ENCODE measurements at regions of chr1 and their contacts with region 1.

Region 1: GRCh38 chr1:240691521-240692338 is 79.8 kb upstream of the GREM2 start:
- DNase-seq: peak; percentile 53 to 65
- H3K4me3 ChIP-seq: no peak overlapping the region
- H3K4me1 ChIP-seq: peaks cover 11% of the 10 kb centered on the region
- H3K27me3 ChIP-seq: 0 out of 2 replicates have a peak, but pooled peaks cover 3% of the 10 kb centered on the region

Region 2: GRCh38 chr1:239655003-239655402 is 1036.7 kb before region 1 on chr1:
- in situ Hi-C with region 1: no loop called
- DNase-seq: no peak
- H3K4me3 ChIP-seq: no peak overlapping the region
- H3K4me1 ChIP-seq: 0 out of 2 replicates have a peak, but pooled peaks cover 3% of the 10 kb centered on the region
- H3K27me3 ChIP-seq: no peaks in the 10 kb centered on the region

Region 3: GRCh38 chr1:240004086-240004749 is 687.5 kb before region 1 on chr1:
- in situ Hi-C with region 1: loop called (anchors 25 kb)
- DNase-seq: peak in 1 of 2 experiments; percentile 55
- H3K4me3 ChIP-seq: no peak overlapping the region
- H3K4me1 ChIP-seq: no peaks in the 10 kb centered on the region
- H3K27me3 ChIP-seq: no peaks in the 10 kb centered on the region

Region 4: DNA sequence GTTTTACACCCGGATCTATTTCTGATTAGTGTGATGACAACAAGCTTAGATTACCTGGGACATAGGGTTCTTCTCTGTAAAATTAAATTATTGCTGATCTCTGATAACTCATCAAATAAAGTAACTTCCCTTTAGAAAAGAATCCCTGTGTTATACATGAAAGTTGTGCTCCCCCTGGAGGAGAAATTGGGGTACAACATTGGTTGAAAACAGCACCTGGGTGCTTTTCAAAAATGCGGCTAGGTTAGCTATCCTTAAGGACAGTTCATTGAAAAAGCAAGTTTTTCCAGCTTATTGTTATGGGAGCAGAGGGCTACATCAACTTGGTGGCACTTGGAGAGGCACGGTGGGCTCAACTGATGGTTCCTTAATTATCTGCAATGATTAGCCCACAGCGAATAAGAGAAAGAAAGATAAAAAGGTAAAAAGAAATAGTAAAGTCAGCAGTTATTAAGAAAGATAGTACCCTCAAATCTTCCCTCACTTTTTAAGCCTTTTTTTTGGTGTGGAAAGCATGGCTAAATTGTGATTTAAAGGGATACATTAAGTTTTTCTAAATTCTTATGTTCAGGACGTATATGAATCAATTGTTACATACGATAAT is 502.2 kb before region 1 on chr1:
- in situ Hi-C with region 1: loop called (anchors 25 kb)
- DNase-seq: peak; percentile 51 to 67
- H3K4me3 ChIP-seq: no peak overlapping the region
- H3K4me1 ChIP-seq: no peaks in the 10 kb centered on the region
- H3K27me3 ChIP-seq: no peaks in the 10 kb centered on the region